ENCODE measurements at regions of chr6 and their contacts with region 1.

Region 1: GRCh38 chr6:168147205-168147738 is 68.3 kb upstream of the FRMD1 start:
- DNase-seq: no peak
- H3K4me3 ChIP-seq: no peak overlapping the region
- H3K27ac ChIP-seq: no peak overlapping the region
- H3K4me1 ChIP-seq: no peaks in the 10 kb centered on the region
- H3K27me3 ChIP-seq: peaks cover 0 to 54% (median 0%) of the 10 kb centered on the region in 7 donors
- CTCF ChIP-seq: no peak
- POLR2A ChIP-seq: no peak

Region 2: GRCh38 chr6:168342641-168343040 is 195.4 kb after region 1 on chr6:
- intact Hi-C with region 1: loop called (anchors 10 kb)
- DNase-seq: no peak
- H3K4me3 ChIP-seq: no peak overlapping the region
- H3K27ac ChIP-seq: no peak overlapping the region
- H3K4me1 ChIP-seq: no peaks in the 10 kb centered on the region
- H3K27me3 ChIP-seq: peaks cover 0 to 53% (median 6%) of the 10 kb centered on the region in 7 donors
- CTCF ChIP-seq: no peak
- POLR2A ChIP-seq: no peak